ENCODE measurements at regions of chr14 and their contacts with region 1.

Region 1: GRCh38 chr14:36373982-36374673 is 53.7 kb upstream of the MBIP start:
- DNase-seq: peak; percentile 51
- H3K4me3 Mint-ChIP-seq: no peak overlapping the region
- H3K27ac Mint-ChIP-seq: no peak overlapping the region
- H3K4me1 Mint-ChIP-seq: no peaks in the 10 kb centered on the region
- H3K27me3 Mint-ChIP-seq: no peaks in the 10 kb centered on the region

Region 2: GRCh38 chr14:35883677-35884293 is 490.3 kb before region 1 on chr14:
- intact Hi-C with region 1: loop called (anchors 1 kb)
- DNase-seq: no peak
- H3K4me3 Mint-ChIP-seq: no peak overlapping the region
- H3K27ac Mint-ChIP-seq: no peak overlapping the region
- H3K4me1 Mint-ChIP-seq: peaks cover 11% of the 10 kb centered on the region
- H3K27me3 Mint-ChIP-seq: peaks cover 14% of the 10 kb centered on the region

Region 3: GRCh38 chr14:36207500-36207899 is 166.6 kb before region 1 on chr14:
- intact Hi-C with region 1: loop called (anchors 1 kb)
- DNase-seq: no peak
- H3K4me3 Mint-ChIP-seq: no peak overlapping the region
- H3K27ac Mint-ChIP-seq: no peak overlapping the region
- H3K4me1 Mint-ChIP-seq: peaks cover 3% of the 10 kb centered on the region
- H3K27me3 Mint-ChIP-seq: peaks cover 2% of the 10 kb centered on the region

Region 4: GRCh38 chr14:36271939-36272907 is 101.9 kb before region 1 on chr14:
- intact Hi-C with region 1: loop called (anchors 10 kb)
- DNase-seq: no peak
- H3K4me3 Mint-ChIP-seq: peak overlapping the region; percentile 67
- H3K27ac Mint-ChIP-seq: no peak overlapping the region
- H3K4me1 Mint-ChIP-seq: peaks cover 8% of the 10 kb centered on the region
- H3K27me3 Mint-ChIP-seq: peaks cover 50% of the 10 kb centered on the region

Region 5: GRCh38 chr14:36315159-36315853 is 58.8 kb before region 1 on chr14:
- intact Hi-C with region 1: loop called (anchors 5 kb)
- DNase-seq: no peak
- H3K4me3 Mint-ChIP-seq: no peak overlapping the region
- H3K27ac Mint-ChIP-seq: peak overlapping the region; percentile 82
- H3K4me1 Mint-ChIP-seq: peaks cover 33% of the 10 kb centered on the region
- H3K27me3 Mint-ChIP-seq: no peaks in the 10 kb centered on the region